Activated CD4-positive, alpha-beta memory T cell treated with anti-CD3 and anti-CD28 coated beads, Interleukin-2, amount 10 ng/mL, durations not matched to agents 7 days and 5 days (primary cell): ENCODE measurements at regions of chr1 and their contacts with region 1.

Region 1: DNA sequence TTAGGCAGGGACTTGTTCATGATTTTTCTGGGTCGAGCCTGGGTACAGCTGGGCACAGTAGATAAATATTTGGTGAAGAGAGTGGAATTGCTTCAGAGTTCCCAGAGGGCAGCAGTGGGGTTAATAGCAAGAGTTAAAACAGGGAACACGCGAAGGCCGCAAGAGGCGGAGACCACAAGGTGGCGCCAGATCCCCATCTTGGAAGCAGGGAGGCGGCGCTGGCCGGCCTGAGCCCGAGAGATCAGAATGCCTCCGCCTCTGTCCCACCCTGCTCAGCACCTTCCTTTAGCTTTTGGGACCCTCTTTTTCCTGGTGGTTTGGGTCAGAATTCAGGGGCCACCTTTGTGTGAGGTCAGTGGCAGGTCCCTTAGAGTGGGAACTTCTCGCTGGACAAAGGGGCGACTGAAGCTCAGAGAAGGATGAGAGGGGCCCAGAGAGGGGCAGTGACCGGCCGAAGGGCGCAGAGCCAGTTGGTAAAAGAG is 6.5 kb upstream of the PADI2 start:
- DNase-seq: peak; percentile 80
- H3K4me3 Mint-ChIP-seq: no peak overlapping the region
- H3K27ac Mint-ChIP-seq: no peak overlapping the region
- H3K4me1 Mint-ChIP-seq: no peaks in the 10 kb centered on the region
- H3K27me3 Mint-ChIP-seq: peaks cover 11% of the 10 kb centered on the region

Region 2: DNA sequence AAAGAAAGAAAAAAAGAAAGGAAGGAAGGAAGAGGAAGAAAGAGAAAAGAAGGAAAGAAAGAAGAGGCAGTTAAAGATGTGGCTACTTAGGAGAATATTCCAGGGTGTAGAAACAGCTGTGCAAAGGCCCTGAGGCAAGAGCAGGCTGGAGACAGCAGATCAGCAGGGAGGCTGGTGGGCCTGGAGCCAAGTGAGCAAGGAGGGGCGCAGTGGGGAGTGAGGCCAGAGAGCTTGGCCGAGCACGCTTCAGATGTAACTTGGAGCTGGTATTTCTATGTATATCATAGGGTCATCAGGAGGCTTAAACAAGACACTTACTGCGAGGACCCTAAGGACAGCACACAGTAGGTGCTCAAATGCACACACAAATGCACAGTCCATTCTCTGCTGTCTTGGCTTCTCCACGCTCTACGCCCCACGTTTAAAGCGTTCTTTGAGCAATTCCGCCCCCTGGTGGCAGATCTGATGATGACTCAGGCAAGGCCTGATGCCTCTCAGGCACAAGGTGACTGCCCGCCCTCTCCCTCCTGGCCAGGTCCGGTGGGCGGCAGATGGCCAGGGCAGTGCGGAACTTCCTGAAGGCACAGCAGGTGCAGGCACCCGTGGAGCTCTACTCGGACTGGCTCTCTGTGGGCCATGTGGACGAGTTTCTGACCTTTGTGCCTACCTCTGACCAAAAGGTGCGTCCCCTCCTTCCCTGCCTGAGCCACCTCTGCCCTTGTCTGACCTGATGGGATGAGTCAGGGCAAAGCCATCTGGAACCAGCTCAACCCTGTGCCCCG is 111.2 kb after region 1 on chr1:
- CTCF ChIA-PET with region 1: interaction called, 33 read pairs
- POLR2A ChIA-PET with region 1: interaction called, 3 read pairs
- DNase-seq: peak; percentile 85
- H3K4me3 Mint-ChIP-seq: no peak overlapping the region
- H3K27ac Mint-ChIP-seq: no peak overlapping the region
- H3K4me1 Mint-ChIP-seq: no peaks in the 10 kb centered on the region
- H3K27me3 Mint-ChIP-seq: no peaks in the 10 kb centered on the region